ENCODE measurements at regions of chr1 and their contacts with region 1.

Region 1: DNA sequence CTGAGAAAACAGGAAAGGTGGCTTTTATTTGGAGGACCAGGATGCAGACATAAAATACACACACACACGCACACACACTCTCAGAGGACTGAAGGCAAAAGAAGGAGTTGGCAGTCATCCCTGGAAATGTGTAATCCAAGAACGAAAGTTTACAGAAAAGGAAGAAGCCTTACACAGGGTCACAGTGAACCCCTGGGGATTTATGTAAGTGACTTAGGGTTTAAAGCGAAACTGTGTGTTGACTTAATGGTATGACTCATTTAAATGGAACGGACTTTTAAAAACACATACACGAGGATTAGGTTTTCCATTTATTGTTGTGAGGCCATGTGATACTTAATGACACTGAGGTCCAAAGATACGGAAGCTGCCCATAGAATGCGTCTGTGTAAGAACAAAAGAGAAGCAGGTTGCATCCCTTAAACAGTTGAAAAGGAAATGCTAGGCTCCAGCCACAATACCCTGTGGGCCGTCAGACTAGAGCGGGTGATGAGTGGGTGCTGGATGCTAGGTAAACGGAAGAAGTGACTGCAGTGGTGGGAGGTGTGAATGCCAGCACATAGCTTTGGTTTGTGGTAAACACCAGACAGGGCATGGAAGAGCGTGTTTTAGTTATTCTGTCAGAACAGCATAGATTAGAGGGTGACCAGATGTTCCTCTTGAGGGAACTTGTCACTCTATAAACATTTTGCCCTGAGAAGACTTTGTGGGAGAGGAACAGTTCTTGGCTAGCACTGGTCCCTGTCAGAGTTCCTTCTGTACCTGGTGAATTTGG is 21.6 kb upstream of the BCL10 start:
- DNase-seq: peak; percentile 82
- H3K4me3 Mint-ChIP-seq: peak overlapping the region; percentile 56
- H3K27ac Mint-ChIP-seq: peak overlapping the region; percentile 86
- H3K4me1 Mint-ChIP-seq: peaks cover 25% of the 10 kb centered on the region
- H3K27me3 Mint-ChIP-seq: peaks cover 49% of the 10 kb centered on the region

Region 2: DNA sequence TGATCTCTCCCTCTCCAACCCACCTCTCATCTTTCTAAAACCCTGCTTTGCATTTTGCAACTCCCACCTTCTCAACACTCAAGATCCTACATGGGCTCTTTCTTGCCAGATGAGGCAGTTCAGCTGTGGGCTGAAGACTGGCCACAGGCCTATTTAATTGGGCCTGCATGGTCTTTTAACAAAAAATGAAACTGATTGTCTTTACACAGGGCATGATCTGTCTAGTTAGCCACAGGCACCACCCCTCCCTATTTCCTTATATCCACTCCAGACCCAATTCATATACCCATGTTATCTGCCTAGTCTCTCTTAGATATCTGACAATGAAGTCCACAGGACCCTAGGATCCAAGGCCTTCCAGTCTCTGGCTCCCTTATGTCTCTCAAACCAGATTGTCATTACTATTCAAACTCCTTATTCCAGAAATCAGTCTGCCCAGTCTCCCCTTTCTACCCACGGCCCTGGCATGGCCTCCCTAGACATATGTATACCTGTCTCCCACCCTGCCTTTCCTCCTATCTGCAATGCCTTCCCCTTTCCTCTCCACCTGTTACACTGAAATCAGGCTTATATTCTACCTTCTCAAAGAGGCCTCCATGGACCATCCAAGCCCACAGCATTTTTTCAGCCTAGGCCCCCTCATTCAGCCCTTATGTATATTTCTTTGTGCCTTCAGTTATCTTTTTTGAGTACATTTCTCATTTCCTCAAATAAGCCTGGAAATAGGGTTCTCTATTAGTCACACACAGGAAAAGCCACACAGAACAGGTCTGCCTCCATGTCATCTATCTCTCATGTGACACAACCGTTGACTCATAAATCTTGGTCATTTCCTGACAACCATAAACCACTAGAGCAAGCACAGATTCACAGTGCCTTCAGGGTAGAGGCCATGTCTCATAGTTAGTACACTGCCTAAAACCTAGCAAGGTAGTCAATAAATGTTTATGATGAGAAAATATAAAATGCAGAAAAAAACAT is 444.0 kb before region 1 on chr1:
- intact Hi-C with region 1: loop called (anchors 2 kb)
- DNase-seq: peak; percentile 88
- H3K4me3 Mint-ChIP-seq: peak overlapping the region; percentile 64
- H3K27ac Mint-ChIP-seq: peak overlapping the region; percentile 74
- H3K4me1 Mint-ChIP-seq: peaks cover 41% of the 10 kb centered on the region
- H3K27me3 Mint-ChIP-seq: no peaks in the 10 kb centered on the region

Region 3: GRCh38 chr1:85158910-85159309 is 139.1 kb before region 1 on chr1:
- intact Hi-C with region 1: no loop called
- DNase-seq: no peak
- H3K4me3 Mint-ChIP-seq: no peak overlapping the region
- H3K27ac Mint-ChIP-seq: no peak overlapping the region
- H3K4me1 Mint-ChIP-seq: no peaks in the 10 kb centered on the region
- H3K27me3 Mint-ChIP-seq: no peaks in the 10 kb centered on the region

Region 4: GRCh38 chr1:85276215-85276977 is 21.6 kb before region 1 on chr1 and contains the start of gene BCL10:
- intact Hi-C with region 1: loop called (anchors 1 kb)
- DNase-seq: peak; percentile 100
- H3K4me3 Mint-ChIP-seq: peak within 1 kb of the TSS; percentile 84
- H3K27ac Mint-ChIP-seq: peak within 1 kb of the TSS; percentile 91
- H3K4me1 Mint-ChIP-seq: peaks cover 46% of the 10 kb centered on the region
- H3K27me3 Mint-ChIP-seq: peaks cover 20% of the 10 kb centered on the region
- total RNA-seq, gene BCL10: 25.5 and 27.8 TPM in 2 replicates

Region 5: GRCh38 chr1:85307987-85308832 is 10.2 kb after region 1 on chr1:
- intact Hi-C with region 1: loop called (anchors 1 kb)
- DNase-seq: peak; percentile 85
- H3K4me3 Mint-ChIP-seq: no peak overlapping the region
- H3K27ac Mint-ChIP-seq: no peak overlapping the region
- H3K4me1 Mint-ChIP-seq: peaks cover 2% of the 10 kb centered on the region
- H3K27me3 Mint-ChIP-seq: peaks cover 68% of the 10 kb centered on the region

Region 6: DNA sequence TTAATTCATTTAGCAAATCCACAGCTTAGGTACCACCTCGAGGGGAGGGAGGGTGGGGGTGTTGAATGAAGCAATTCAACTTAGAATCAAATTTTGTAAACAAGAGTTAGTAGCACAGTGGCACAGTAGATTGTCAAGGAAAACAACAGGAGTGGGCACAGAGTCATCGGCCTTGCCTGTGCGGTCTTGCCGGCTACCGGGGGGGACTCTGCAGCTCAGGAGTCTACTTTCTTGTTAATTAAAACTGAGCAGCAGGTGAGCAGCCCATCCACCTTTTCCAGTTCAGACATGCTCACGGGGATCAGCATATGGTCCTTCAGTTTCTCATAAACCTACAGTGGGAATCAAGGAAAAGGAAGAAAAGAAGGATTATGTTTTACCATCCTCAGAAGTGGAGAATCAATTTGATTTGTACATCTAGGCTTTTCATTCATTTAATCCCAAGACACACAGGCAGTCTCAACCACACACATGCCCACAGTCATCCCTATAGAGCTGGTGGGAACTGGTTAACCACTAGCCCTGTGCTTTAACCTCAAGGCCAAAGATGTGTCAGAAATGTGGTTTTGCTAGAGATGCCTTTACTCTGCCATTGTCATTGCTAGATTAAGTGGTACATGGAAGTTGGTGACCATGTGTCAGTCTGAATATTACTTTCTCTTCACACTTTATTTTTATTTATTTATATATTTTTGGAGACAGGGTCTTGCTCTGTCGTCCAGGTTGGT is 23.4 kb after region 1 on chr1:
- intact Hi-C with region 1: loop called (anchors 1 kb)
- DNase-seq: peak; percentile 65
- H3K4me3 Mint-ChIP-seq: no peak overlapping the region
- H3K27ac Mint-ChIP-seq: no peak overlapping the region
- H3K4me1 Mint-ChIP-seq: peaks cover 11% of the 10 kb centered on the region
- H3K27me3 Mint-ChIP-seq: peaks cover 65% of the 10 kb centered on the region

Measured in activated CD4-positive, alpha-beta T cell treated with anti-CD3 and anti-CD28 coated beads, Interleukin-2, amount 10 ng/mL, durations not matched to agents 24 days and 14 days (primary cell).